Dorsolateral prefrontal cortex (tissue), 120 donors: ENCODE measurements at regions of chr1 and their contacts with region 1.

Region 1: DNA sequence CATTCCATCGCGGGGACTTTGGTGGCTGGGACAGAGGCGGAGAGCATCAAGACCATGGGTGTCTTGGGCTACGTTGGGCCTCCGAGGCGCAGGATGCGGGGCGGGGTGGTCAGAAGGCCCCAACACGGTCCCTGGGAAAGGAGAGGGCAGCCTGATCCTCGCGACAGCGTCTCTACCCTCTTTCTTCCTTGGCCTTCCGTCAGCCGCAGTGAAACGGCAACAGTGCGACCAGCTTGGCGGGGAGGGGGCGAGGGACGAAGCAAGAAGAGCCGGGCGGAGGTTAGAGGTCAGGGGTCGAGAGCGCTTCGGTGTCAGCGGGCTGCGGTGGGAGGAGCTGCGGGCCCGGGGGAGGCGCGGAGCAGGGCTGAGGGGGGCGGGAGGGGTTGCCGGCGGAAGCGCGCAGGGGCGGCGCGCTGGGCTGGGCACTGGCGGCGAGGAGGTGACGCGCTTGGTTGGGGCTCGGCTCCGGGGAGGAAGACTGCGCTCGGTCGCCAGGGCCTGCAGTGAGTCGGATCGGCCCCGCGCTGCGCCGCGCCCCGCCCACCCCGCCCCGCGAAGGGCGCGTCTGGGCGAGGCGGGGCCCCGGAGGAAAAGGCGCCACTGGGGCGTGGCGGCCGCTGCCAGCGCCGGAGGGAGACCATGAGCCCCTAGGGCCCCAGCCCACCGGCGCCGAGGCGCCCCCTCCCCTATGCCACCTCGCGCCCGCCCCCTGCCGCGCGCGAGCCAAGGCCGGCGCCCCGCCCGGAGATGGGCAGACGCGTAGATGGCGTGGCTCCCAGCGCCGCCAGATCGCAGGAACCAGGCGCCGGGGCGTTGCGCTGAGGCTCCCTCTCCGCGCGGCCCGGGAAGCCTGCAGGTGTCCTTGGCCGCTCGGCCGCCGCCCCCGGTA is at the start of gene KCNC4:
- DNase-seq: peak in 9 of 10 donors; percentile 44 to 87 (median 76)
- H3K4me3 ChIP-seq: peak within 1 kb of the TSS; percentile 51 to 85 (median 71)
- H3K27ac ChIP-seq: peak within 1 kb of the TSS in 58 of 59 donors; percentile 43 to 94 (median 85)
- H3K27me3 ChIP-seq: peaks cover 0 to 9% (median 0%) of the 10 kb centered on the region in 45 donors
- CTCF ChIP-seq: peak in 14 of 56 donors; percentile 6 to 39 (median 16)
- total RNA-seq, gene KCNC4: 16.2 to 73.4 (median 46.6) TPM

Region 2: DNA sequence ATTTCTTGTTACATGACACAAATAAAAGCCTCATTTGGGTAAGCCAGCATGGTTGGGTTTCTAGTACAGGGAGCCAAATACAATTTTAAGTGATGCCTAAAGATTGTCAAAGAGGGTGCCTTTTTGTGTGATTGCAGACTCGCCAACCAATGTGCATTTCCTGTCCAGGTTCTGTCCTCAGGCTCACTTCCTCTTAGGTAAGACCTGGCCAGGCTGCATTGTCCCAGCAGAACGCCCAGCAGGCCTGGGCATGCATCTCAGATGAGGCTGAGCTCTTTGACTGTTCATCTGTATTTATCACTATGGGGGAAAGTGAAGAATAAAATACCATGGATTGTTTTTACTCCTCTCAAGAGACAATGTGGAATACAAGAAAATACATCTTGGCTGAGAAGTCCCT is 49.8 kb after region 1 on chr1:
- intact Hi-C with region 1: loop called in 1 of 2 experiments (anchors 2 kb)
- DNase-seq: no peak
- H3K4me3 ChIP-seq: no peak overlapping the region
- H3K27ac ChIP-seq: no peak overlapping the region
- H3K27me3 ChIP-seq: peaks cover 0 to 4% (median 0%) of the 10 kb centered on the region in 45 donors
- CTCF ChIP-seq: no peak

Region 3: GRCh38 chr1:110312188-110313121 is 102.5 kb after region 1 on chr1:
- intact Hi-C with region 1: loop called (anchors 1 to 2 kb)
- DNase-seq: peak; percentile 63 to 95 (median 84)
- H3K4me3 ChIP-seq: peak overlapping the region in 4 of 59 donors; percentile 4 to 21 (median 14)
- H3K27ac ChIP-seq: peak overlapping the region in 22 of 59 donors; percentile 3 to 83 (median 53)
- H3K27me3 ChIP-seq: no peaks in the 10 kb centered on the region
- CTCF ChIP-seq: peak; percentile 71 to 100 (median 96)

Region 4: DNA sequence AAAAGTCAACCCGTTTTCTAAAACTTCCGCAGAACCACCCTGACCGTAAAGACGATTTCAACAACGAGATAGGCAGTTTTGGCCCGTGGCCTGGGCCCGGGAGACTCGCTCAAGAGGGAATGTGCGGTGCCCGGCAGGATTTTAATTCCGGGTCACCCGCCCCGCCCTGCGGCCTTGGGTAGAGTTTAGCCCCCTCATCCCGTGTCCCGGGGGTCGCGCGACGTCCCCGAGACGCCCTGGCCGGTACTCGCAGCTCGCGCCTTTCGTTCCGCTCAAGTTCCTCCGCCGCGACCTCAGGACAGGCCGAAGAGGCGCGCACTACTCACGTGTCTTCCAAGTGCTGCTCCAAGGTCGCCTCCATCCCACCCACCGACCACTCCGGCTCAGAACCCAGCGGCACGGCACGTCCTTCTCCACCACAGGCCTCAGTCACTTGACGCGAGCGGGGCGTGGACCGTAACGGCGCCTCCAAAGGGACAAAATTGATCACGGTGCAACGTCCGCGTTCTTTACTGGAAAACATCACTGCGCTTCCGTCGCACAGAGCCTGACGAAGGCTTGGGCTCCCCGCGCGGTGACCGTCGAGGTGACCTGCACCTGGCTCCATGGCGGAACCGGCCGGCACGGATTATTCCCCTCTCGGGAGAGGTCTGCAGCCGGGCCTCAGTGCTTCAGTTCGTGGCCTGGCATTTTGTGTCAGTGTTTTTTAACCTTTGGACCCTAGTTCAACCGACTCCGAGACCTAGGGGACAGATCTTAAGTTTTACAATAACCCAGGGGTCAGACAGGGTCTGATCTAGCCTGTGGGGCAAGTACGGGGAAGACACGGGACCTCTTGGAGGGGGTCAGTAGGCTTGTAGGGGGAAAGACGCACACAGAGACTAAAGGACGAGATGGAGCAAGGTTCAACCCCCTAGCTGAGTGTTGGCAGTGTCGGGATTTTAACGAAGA is 197.6 kb after region 1 on chr1 and contains the start of gene LAMTOR5:
- intact Hi-C with region 1: loop called in 1 of 2 experiments (anchors 5 kb)
- DNase-seq: peak; percentile 87 to 95 (median 92)
- H3K4me3 ChIP-seq: peak within 1 kb of the TSS; percentile 72 to 100 (median 93)
- H3K27ac ChIP-seq: peak within 1 kb of the TSS; percentile 74 to 99 (median 93)
- H3K27me3 ChIP-seq: no peaks in the 10 kb centered on the region
- CTCF ChIP-seq: peak in 48 of 56 donors; percentile 5 to 63 (median 38)
- total RNA-seq, gene LAMTOR5: 68.7 to 146 (median 106) TPM

Region 5: DNA sequence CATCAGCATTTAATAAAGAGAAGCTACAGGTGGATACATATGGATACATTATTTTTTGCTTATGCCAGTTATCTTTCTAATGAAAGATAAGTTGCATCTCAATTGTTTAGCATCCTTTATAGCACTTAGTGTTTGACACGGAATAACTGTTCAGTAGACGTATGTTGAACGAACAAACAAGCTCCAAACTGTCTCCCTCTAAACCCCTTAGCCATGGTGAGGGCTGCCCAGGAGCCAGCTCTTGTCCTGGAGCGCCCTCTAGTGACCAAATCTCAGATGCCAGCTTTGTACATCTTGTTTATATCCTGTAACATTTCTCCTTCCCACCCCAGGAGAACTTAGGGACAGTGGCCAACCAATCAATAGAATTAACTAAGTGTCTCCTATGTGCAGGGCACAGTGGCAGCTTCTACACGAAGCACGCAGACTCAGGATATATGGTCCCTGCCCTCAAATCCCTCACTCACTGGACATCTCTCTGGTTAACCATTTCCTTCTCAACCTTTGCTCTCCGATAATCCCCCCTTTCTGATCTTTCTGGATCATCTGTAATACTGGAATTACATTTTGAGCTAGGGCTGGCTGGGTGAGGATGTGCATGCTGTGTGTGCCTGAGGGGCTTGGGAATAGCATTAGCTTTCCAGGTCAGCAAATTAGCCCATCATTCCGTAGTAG is 286.1 kb after region 1 on chr1:
- intact Hi-C with region 1: loop called in 1 of 2 experiments (anchors 2 kb)
- DNase-seq: peak; percentile 56 to 92 (median 78)
- H3K4me3 ChIP-seq: no peak overlapping the region
- H3K27ac ChIP-seq: no peak overlapping the region
- H3K27me3 ChIP-seq: no peaks in the 10 kb centered on the region
- CTCF ChIP-seq: peak; percentile 66 to 97 (median 89)